ENCODE measurements at regions of chr3 and their contacts with region 1.

Region 1: DNA sequence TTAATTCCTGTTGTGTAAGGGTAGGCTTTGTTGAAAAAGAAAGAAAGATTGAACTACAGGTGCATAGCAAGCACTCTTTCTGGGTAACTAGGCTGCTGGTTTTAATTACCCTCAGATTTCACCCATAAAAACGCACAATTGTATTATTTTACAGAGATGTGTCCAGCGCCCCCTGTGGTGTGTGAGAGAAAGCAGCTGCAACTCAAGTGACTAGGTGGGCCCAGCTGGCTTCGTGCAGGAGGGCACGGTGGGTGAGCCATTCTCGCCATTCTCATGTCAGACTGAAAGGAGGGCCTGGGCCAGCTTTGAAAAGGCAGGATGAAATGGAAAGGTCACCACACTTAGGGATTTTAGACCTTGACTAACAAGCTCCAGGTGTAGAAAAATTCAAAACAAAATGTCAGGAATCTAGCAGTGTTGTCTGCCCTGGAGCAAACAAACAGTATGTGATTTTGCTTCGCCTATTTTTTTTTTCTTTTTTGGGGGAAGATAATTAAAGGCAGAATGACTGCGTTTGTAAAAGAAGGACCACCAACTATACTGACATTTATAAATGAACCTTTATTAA is 122.5 kb downstream of the LRIG1 start:
- H3K4me3 ChIP-seq: no peak overlapping the region
- H3K27ac ChIP-seq: no peak overlapping the region
- H3K4me1 ChIP-seq: no peaks in the 10 kb centered on the region
- CTCF ChIP-seq: no peak

Region 2: DNA sequence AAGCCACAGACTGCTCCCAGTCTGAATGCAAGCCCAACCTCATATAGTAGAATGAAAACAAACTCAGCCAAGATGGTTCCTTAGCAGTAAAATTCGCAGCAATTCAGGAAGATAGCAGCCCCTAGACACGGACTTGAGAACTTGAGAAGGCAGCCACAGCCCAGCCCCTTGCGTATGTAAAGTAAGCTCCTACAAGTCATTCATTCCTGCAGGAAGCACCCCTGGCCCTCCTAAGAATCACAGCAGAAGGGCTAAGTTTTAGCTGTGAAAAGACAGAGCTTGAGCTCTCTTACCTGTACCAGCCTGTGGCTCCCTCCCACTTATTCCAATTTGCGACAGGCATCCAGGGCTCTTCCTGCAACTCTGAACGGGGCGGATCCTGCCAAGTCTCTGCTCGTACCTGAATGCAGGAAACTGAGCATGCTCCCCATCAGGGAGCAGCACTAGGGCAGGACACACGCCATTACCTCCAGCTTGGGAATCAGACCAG is 476.0 kb before region 1 on chr3:
- CTCF ChIA-PET with region 1: no interaction called
- POLR2A ChIA-PET with region 1: no interaction called
- H3K4me3 ChIP-seq: no peak overlapping the region
- H3K27ac ChIP-seq: no peak overlapping the region; the same call in 1 of the 2 replicates
- H3K4me1 ChIP-seq: no peaks in the 10 kb centered on the region
- CTCF ChIP-seq: no peak

Region 3: DNA sequence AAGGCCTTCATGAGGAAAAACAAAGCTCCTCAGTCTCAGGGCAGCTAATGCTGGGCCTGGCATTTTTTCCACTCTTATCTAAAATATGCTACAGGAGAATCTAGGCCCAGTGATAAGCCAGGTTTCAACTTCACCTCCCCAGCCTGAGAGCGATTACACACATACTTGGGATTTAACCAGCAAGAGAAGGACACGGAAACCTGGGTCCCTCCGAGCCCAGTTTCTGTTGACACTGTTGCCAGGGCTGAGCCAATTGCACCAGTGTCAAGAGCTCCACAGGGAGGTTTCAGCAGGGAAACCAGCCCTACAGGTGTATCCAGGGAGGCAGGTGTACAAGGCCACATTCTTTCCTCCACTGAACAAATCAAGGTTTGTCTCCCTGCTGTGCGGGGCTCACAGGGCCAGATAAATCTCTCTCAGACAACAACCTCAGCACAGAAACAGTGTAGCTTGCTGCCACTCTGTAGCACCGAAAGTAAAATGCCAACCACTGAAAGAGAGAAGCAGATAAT is 425.0 kb before region 1 on chr3:
- CTCF ChIA-PET with region 1: no interaction called
- POLR2A ChIA-PET with region 1: no interaction called
- H3K4me3 ChIP-seq: no peak overlapping the region
- H3K27ac ChIP-seq: peak overlapping the region; percentile 40; the same call in 1 of the 2 replicates
- H3K4me1 ChIP-seq: peaks cover 13% of the 10 kb centered on the region; the same call in 1 of the 2 replicates
- CTCF ChIP-seq: no peak

Region 4: DNA sequence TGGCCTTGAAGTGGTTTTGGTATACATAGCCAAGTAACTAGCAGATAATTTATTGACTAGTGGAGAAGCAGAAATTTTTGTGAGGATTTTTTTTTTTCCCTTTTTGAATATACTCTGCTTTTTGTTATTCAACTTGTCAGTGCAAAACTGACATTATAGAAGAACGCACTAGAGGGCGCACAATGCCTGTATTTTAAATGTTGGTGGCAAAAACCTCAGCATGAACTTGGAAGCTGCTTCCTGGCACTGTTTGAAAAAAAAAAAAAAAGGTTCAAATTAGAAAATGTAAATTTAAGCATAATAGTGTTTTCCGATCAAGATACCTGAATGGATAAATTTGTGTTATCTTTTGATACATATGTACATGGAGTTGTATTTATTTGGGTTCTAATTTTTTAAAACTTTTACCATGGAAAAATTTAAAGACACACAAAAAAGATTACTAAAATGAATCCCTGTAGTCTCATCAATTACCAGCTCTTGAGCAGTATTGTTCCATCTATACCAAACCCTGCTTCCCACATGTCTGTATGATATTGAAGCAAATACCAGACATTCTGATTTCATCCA is 101.5 kb before region 1 on chr3:
- CTCF ChIA-PET with region 1: interaction called, 17 read pairs
- POLR2A ChIA-PET with region 1: no interaction called
- H3K4me3 ChIP-seq: no peak overlapping the region
- H3K27ac ChIP-seq: no peak overlapping the region
- H3K4me1 ChIP-seq: no peaks in the 10 kb centered on the region
- CTCF ChIP-seq: no peak

Region 5: GRCh38 chr3:66317750-66318376 is 60.5 kb before region 1 on chr3:
- CTCF ChIA-PET with region 1: no interaction called
- POLR2A ChIA-PET with region 1: no interaction called
- H3K4me3 ChIP-seq: no peak overlapping the region
- H3K27ac ChIP-seq: no peak overlapping the region
- H3K4me1 ChIP-seq: no peaks in the 10 kb centered on the region
- CTCF ChIP-seq: no peak

Region 6: DNA sequence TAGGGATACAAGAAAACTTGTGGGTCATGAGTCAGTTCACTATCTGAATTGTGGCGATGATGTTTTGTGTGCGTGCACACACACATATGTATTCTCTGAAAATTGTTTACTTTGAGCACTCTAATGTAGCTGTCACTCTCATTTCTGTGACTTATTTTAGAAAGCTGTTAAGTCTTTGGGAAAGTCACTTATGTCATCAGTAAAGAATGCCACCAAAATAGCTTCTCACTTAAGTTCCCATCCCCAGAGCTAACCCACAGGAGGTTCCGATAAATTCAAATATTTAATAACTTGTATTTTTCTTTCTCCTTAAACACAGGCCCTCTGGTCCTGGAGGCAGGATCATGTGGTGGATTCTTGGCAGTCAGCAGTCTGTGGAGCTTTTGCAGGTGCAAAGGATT is 15.8 kb before region 1 on chr3:
- CTCF ChIA-PET with region 1: interaction called, 10 read pairs
- POLR2A ChIA-PET with region 1: no interaction called
- H3K4me3 ChIP-seq: no peak overlapping the region
- H3K27ac ChIP-seq: no peak overlapping the region
- H3K4me1 ChIP-seq: no peaks in the 10 kb centered on the region
- CTCF ChIP-seq: no peak

Region 7: GRCh38 chr3:66394019-66394752 is 15.8 kb after region 1 on chr3:
- CTCF ChIA-PET with region 1: interaction called, 10 read pairs
- POLR2A ChIA-PET with region 1: no interaction called
- H3K4me3 ChIP-seq: no peak overlapping the region
- H3K27ac ChIP-seq: no peak overlapping the region
- H3K4me1 ChIP-seq: no peaks in the 10 kb centered on the region
- CTCF ChIP-seq: no peak

Measured in HEK293 (cell line).